ENCODE measurements at regions of chrX and their contacts with region 1.

Region 1: DNA sequence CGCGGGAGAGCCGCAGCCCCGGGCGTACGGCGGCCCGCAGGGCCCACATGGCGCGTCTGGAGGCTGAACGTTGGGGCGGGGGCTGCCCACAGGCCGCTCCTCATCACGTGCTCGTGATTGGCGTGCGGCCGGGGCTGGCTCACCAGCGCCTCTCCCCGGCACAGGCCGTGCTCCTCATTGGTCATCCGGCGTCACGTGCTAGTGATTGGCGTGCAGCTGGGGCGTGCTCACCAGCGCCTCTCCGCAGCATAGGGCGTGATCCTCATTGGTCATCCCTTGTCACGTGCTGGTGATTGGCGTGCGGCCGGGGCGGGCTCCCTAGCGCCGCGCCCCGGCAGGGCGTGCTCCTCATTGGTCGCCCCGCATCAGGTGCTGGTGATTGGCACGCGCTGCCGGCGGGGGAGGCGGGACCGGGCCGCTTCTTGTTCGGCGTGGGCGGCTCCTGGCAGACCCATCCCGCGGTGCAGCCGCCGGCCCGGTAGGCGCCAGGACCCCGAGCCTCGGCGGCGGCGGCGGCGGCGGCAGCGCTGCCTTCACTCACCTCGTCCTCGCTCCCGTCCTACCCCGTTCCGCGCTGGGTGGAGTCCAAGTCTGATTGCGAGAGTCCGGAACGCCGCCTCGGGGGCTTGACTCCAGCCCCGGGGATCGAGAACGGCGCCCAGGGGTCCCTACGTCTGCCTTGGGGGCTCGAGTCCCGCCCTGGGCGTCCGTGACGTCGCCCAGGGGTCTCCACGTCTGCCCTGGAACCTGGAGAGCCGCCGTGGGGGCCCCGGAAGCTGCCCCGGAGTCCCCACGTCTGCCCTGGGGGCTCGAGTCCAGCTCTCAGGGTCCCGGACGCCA is at the start of gene GTPBP6:
- DNase-seq: peak; percentile 99 to 100
- H3K4me3 ChIP-seq: peak within 1 kb of the TSS; percentile 76 to 97
- H3K27ac ChIP-seq: peak within 1 kb of the TSS; percentile 91 to 95
- H3K4me1 ChIP-seq: peaks cover 0 to 35% (median 17%) of the 10 kb centered on the region in 4 donors
- H3K27me3 ChIP-seq: peaks cover 0 to 4% of the 10 kb centered on the region in 2 donors
- CTCF ChIP-seq: peak in 1 of 2 experiments; percentile 28

Region 2: DNA sequence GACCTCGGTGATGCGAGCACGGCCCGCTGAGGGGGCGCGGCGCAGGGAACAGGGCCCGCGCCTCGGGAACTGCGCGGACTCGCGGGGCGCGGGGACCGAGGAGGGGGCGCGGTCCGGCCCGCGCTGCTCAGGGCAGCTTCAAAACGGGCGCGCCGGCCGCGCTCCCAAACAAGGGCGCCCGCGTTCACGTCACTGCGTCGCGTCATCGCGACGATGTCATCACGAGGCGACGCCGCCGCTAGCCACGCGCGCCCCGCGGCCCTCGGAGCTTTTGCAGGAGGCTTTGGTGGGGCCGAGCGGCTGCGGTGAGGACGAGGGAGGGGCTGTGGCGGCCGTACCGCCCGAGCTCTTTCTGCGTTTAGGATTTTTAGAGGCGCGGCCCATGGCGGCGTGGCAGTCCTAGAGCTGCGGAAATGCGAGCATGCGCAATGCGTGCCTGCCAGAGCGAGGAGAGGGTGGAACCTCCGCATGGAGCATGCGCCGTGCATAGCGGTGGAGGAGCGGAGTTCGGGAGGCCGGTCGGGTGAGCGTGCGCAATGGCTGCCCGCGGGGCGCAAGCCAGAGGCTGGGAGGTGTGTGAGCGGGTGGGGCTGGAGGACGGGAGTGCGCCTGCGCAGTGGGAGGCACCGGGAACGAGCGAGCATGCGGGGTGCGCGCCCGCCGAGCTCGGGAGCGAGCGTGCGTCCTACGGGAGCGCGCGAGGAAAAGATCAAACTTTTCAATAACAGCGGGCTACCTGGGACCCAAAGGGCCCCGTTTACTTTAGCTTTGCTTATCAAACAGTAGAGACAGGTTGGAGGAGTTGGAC is 68.0 kb after region 1 on chrX and contains the start of gene PPP2R3B:
- intact Hi-C with region 1: loop called (anchors 5 kb)
- DNase-seq: peak; percentile 97 to 99
- H3K4me3 ChIP-seq: peak within 1 kb of the TSS; percentile 82 to 84
- H3K27ac ChIP-seq: peak within 1 kb of the TSS; percentile 95 to 96
- H3K4me1 ChIP-seq: peaks cover 0 to 16% (median 12%) of the 10 kb centered on the region in 4 donors
- H3K27me3 ChIP-seq: no peaks in the 10 kb centered on the region
- CTCF ChIP-seq: peak in 1 of 2 experiments; percentile 36

Region 3: DNA sequence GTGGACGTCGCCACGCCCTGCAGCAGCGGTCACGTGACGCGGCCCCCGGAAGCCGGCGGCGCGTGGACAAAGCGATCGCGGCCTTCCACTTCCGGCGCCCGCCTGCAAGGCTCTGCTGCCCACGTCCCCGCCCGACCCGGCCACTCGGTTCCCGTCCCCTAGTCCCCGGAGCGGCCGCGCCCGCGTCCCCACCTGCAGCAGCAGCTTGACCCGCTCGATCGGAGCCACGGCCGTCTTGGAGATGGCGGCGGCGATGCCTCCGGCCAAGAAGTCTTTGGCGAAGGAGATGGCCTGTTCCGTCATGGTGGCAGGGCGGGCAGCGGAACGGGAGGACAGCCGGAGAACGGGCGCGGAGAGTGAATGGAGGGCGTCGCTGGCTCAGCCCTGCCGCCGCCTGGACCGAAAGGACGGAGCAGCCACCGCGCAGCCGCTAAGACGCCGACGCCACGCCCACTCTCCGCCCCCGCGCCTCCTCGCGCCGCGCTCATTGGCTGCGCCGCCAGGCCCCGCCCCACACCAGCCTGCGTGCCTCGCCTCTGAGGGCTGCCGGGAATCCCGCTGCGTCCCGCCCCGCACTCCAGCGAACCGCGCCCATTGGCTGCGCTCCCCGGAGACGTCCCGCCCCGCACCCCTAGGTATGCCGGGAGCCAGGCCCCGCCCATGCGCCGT is 1072.9 kb after region 1 on chrX and contains the start of gene SLC25A6:
- intact Hi-C with region 1: loop called (anchors 10 kb)
- DNase-seq: peak; percentile 97 to 99
- H3K4me3 ChIP-seq: peak within 1 kb of the TSS; percentile 89 to 92
- H3K27ac ChIP-seq: peak within 1 kb of the TSS; percentile 97 to 98
- H3K4me1 ChIP-seq: peaks cover 0 to 54% (median 43%) of the 10 kb centered on the region in 4 donors
- H3K27me3 ChIP-seq: no peaks in the 10 kb centered on the region
- CTCF ChIP-seq: peak; percentile 5 to 19

Region 4: GRCh38 chrX:1407035-1407434 is 1088.1 kb after region 1 on chrX:
- intact Hi-C with region 1: no loop called
- DNase-seq: no peak
- H3K4me3 ChIP-seq: no peak overlapping the region
- H3K27ac ChIP-seq: no peak overlapping the region
- H3K4me1 ChIP-seq: no peaks in the 10 kb centered on the region
- H3K27me3 ChIP-seq: no peaks in the 10 kb centered on the region
- CTCF ChIP-seq: no peak

Measured in tibial artery (tissue), 4 donors.